Activated CD4-positive, alpha-beta memory T cell treated with anti-CD3 and anti-CD28 coated beads for 36 hours (primary cell): ENCODE measurements at regions of chr10 and their contacts with region 1.

Region 1: DNA sequence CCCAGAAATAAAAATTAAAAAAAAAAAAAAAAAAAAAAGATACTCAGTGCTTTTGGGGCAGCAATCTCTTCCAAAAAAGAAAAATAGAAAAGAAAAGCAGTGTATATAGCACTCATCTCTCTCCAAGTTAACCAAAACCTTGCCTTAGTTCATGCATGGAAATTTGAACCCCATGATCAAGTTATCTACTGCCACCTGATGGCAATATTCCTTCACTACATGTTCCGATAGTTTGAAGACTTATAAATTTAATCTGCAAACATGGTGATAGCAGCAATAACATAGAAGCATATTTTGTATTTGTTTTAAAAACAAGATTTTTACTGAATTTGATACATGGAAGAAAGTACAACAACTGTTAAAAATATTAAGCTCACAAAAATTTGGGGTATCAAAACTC is 48.6 kb upstream of the SLIT1 start:
- DNase-seq: no peak
- H3K4me3 Mint-ChIP-seq: no peak overlapping the region
- H3K27ac Mint-ChIP-seq: no peak overlapping the region
- H3K4me1 Mint-ChIP-seq: peaks cover 18% of the 10 kb centered on the region
- H3K27me3 Mint-ChIP-seq: no peaks in the 10 kb centered on the region

Region 2: GRCh38 chr10:97217299-97217698 is 17.1 kb before region 1 on chr10:
- CTCF ChIA-PET with region 1: interaction called, 9 read pairs
- POLR2A ChIA-PET with region 1: interaction called, 17 read pairs
- intact Hi-C with region 1: loop called (anchors 1 kb)
- DNase-seq: no peak
- H3K4me3 Mint-ChIP-seq: no peak overlapping the region
- H3K27ac Mint-ChIP-seq: no peak overlapping the region
- H3K4me1 Mint-ChIP-seq: peaks cover 29% of the 10 kb centered on the region
- H3K27me3 Mint-ChIP-seq: no peaks in the 10 kb centered on the region

Region 3: GRCh38 chr10:97222326-97222961 is 12.0 kb before region 1 on chr10:
- CTCF ChIA-PET with region 1: interaction called, 9 read pairs
- POLR2A ChIA-PET with region 1: interaction called, 17 read pairs
- intact Hi-C with region 1: loop called (anchors 1 kb)
- DNase-seq: no peak
- H3K4me3 Mint-ChIP-seq: no peak overlapping the region
- H3K27ac Mint-ChIP-seq: no peak overlapping the region
- H3K4me1 Mint-ChIP-seq: peaks cover 29% of the 10 kb centered on the region
- H3K27me3 Mint-ChIP-seq: no peaks in the 10 kb centered on the region